Heart right ventricle (tissue), 16 donors: ENCODE measurements at regions of chr22 and their contacts with region 1.

Region 1: GRCh38 chr22:50562523-50563412 is at the start of gene SYCE3:
- DNase-seq: peak; percentile 97
- ATAC-seq: peak; percentile 94 to 98 (median 96)
- H3K4me3 ChIP-seq: peak within 1 kb of the TSS; percentile 44 to 87 (median 65)
- H3K27ac ChIP-seq: peak within 1 kb of the TSS; percentile 47 to 91 (median 86)
- H3K4me1 ChIP-seq: peaks cover 0 to 20% (median 7%) of the 10 kb centered on the region in 9 donors
- H3K27me3 ChIP-seq: no peaks in the 10 kb centered on the region
- CTCF ChIP-seq: peak; percentile 88 to 99 (median 98)
- total RNA-seq, gene SYCE3: 0.74 to 0.90 TPM in 2 of 10 donors, not detected in the others

Region 2: DNA sequence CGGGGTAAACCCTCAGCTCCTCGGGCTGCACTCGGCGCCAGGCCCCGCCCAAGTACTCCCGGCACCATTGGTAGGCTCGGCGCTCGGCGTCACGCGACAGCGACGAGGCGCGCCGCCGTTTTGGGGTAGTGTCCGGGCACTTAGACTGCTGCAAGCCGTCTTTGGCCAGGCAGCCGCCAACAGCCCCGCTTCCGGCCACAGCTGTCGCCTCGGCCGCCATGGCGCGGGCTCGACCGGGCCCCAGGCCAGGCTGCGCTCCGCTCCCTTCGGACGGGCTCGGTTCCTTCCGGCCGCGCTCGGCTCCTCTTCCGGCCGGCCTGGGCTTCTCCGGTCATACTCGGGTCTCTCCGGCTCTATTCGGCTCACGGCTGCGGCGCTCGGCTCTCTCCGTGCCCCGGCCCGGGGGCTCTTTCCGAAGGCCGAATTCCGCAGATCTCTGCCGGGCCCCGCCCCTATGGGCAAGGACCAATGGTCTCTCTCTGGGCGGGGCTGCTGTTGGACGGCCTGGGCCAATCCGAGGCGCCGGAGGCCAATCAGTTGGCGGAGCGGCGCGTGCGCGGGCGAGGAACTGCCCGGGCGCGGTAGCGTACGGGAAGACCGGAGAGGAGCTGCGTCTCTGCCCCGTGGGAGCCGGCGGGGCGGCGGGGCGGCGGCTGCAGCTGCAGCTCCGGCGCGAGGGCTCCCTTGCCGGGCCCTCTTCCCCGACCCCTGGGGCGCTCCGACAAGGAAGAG is 20.0 kb after region 1 on chr22 and contains the start of gene CHKB:
- intact Hi-C with region 1: loop called in 1 of 10 experiments (anchors 2 kb)
- DNase-seq: peak; percentile 99
- ATAC-seq: peak; percentile 94 to 98 (median 97)
- H3K4me3 ChIP-seq: peak within 1 kb of the TSS; percentile 58 to 88 (median 78)
- H3K27ac ChIP-seq: peak within 1 kb of the TSS; percentile 96 to 100 (median 97)
- H3K4me1 ChIP-seq: peaks cover 5 to 48% (median 37%) of the 10 kb centered on the region in 9 donors
- H3K27me3 ChIP-seq: no peaks in the 10 kb centered on the region
- CTCF ChIP-seq: peak in 1 of 9 donors; percentile 43
- total RNA-seq, gene CHKB: 31.7 to 60.1 (median 39.9) TPM

Region 3: GRCh38 chr22:50656122-50657070 is 93.6 kb after region 1 on chr22:
- intact Hi-C with region 1: no loop called
- DNase-seq: peak; percentile 30 to 75
- ATAC-seq: peak; percentile 76 to 95 (median 92)
- H3K4me3 ChIP-seq: peak overlapping the region in 3 of 10 donors; percentile 15 to 25 (median 22)
- H3K27ac ChIP-seq: peak overlapping the region; percentile 54 to 87 (median 78)
- H3K4me1 ChIP-seq: peaks cover 0 to 43% (median 19%) of the 10 kb centered on the region in 9 donors
- H3K27me3 ChIP-seq: peaks cover 0 to 30% (median 8%) of the 10 kb centered on the region in 7 donors
- CTCF ChIP-seq: no peak